Activated CD4-positive, alpha-beta T cell treated with anti-CD3 and anti-CD28 coated beads, Interleukin-2, amount 10 ng/mL, durations not matched to agents 7 days and 5 days (primary cell): ENCODE measurements at regions of chr2 and their contacts with region 1.

Region 1: GRCh38 chr2:127129937-127130336 is 23.0 kb upstream of the BIN1 start:
- DNase-seq: no peak
- H3K4me3 Mint-ChIP-seq: no peak overlapping the region
- H3K27ac Mint-ChIP-seq: no peak overlapping the region
- H3K4me1 Mint-ChIP-seq: peaks cover 2% of the 10 kb centered on the region
- H3K27me3 Mint-ChIP-seq: peaks cover 4% of the 10 kb centered on the region

Region 2: DNA sequence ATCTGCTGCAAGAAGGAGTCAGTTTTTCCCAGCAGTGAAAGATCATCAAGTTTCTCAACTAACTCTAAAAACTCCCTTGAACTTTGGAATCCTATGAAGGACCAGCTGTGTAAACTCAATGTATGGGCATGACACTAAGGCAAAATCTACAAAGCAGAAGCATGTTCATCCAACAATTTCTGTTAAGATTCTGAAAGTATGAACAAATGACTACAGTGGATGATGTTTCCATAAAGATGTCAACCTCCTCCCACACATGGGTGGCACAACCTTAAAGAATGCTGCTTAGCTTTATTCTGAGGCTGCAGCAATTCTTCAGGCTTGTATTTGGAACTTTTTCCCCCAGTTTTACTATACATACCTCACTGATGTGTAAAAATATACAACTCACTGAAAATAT is 633.8 kb after region 1 on chr2:
- CTCF ChIA-PET with region 1: no interaction called
- POLR2A ChIA-PET with region 1: no interaction called
- DNase-seq: no peak
- H3K4me3 Mint-ChIP-seq: no peak overlapping the region
- H3K27ac Mint-ChIP-seq: no peak overlapping the region
- H3K4me1 Mint-ChIP-seq: peaks cover 2% of the 10 kb centered on the region
- H3K27me3 Mint-ChIP-seq: no peaks in the 10 kb centered on the region

Region 3: GRCh38 chr2:128215897-128216642 is 1086.1 kb after region 1 on chr2:
- CTCF ChIA-PET with region 1: no interaction called
- POLR2A ChIA-PET with region 1: interaction called, 10 read pairs
- DNase-seq: peak; percentile 77
- H3K4me3 Mint-ChIP-seq: no peak overlapping the region
- H3K27ac Mint-ChIP-seq: no peak overlapping the region
- H3K4me1 Mint-ChIP-seq: peaks cover 21% of the 10 kb centered on the region
- H3K27me3 Mint-ChIP-seq: no peaks in the 10 kb centered on the region